CD4-positive, alpha-beta T cell (primary cell): ENCODE measurements at regions of chr12 and their contacts with region 1.

Region 1: DNA sequence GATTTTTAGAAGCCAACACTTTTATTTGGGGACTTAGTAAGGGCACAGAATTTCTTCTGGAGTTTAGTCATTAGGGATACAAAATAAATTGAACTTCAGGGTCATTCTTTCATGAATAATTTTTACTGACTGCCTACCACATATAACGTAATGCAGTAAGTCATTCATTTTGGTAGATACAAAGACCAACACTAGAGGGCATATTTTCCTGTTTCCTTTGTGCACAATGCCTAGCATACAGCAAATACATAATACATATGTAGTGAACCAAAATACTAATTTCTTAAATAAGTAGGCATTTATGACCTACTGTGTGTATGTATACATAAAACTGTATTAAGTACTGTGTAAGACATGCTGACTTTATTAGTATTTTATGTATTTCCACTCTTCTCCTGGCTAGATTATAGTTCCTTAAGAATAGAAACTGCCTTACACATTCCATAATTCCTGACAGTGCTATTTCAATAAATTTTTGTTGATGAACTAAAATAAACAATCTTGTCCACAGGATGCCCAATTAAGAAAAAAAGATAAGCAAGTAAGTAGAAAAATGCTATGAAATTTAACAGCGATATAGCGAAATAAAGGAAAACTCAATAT is 47.9 kb downstream of the PPP1R12A start:
- DNase-seq: peak in 3 of 14 experiments; percentile 59 to 68 (median 64)
- ATAC-seq: peak; percentile 77
- H3K4me3 ChIP-seq: no peak overlapping the region
- H3K4me3 Mint-ChIP-seq: no peak overlapping the region
- H3K27ac ChIP-seq: no peak overlapping the region
- H3K27ac Mint-ChIP-seq: peak overlapping the region; percentile 1
- H3K4me1 ChIP-seq: peaks cover 5% of the 10 kb centered on the region
- H3K4me1 Mint-ChIP-seq: peaks cover 74% of the 10 kb centered on the region
- H3K27me3 ChIP-seq: no peaks in the 10 kb centered on the region
- H3K27me3 Mint-ChIP-seq: no peaks in the 10 kb centered on the region
- CTCF ChIP-seq: peak; percentile 74

Region 2: DNA sequence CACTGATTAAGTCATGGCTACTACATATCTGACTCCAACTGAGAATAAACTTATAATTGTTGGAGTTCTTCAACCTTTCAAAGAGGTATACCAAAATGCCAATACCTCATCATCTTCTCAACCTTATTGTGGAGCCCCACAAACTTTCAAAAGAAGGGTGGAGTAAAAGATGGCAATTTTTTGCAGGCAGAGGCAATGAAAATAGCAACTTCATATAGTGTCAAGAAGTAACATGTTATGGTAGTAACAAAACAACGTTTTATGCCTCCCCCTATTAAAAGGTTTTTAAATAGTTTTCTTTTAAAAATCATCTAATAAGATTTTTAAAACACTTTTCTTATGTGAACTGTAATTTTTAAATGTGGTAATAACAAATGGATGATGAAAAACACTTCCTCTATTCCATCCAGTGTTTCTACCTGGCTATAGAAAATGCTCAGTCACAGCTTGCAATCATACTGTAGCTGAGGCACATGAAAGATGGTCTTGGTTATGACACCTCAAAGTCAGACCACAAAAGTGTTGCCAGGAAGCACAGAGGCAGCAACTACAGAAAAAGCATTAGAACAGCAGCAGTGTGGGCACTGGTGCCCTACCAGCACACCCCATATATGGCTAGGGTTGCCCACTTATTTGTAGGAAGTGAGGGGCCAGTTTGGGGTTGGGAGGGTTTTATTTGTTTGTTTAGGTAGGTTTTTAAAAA is 40.9 kb after region 1 on chr12:
- CTCF ChIA-PET with region 1: no interaction called
- POLR2A ChIA-PET with region 1: no interaction called
- intact Hi-C with region 1: loop called in 1 of 2 experiments (anchors 5 kb)
- DNase-seq: peak in 13 of 14 experiments; percentile 13 to 86 (median 25)
- ATAC-seq: peak; percentile 97
- H3K4me3 ChIP-seq: no peak overlapping the region
- H3K4me3 Mint-ChIP-seq: peak overlapping the region; percentile 52
- H3K27ac ChIP-seq: no peak overlapping the region
- H3K27ac Mint-ChIP-seq: peak overlapping the region; percentile 83
- H3K4me1 ChIP-seq: peaks cover 22% of the 10 kb centered on the region
- H3K4me1 Mint-ChIP-seq: peaks cover 72% of the 10 kb centered on the region
- H3K27me3 ChIP-seq: no peaks in the 10 kb centered on the region
- H3K27me3 Mint-ChIP-seq: no peaks in the 10 kb centered on the region
- CTCF ChIP-seq: no peak

Region 3: GRCh38 chr12:79935021-79935623 is 48.1 kb after region 1 on chr12 and contains the start of gene PPP1R12A:
- CTCF ChIA-PET with region 1: no interaction called
- POLR2A ChIA-PET with region 1: interaction called, 3 read pairs
- intact Hi-C with region 1: loop called in 1 of 2 experiments (anchors 5 kb)
- DNase-seq: peak; percentile 87 to 98 (median 92)
- ATAC-seq: peak; percentile 85
- H3K4me3 ChIP-seq: peak within 1 kb of the TSS; percentile 69
- H3K4me3 Mint-ChIP-seq: peak within 1 kb of the TSS; percentile 87
- H3K27ac ChIP-seq: peak within 1 kb of the TSS; percentile 83 to 85
- H3K27ac Mint-ChIP-seq: peak within 1 kb of the TSS; percentile 96
- H3K4me1 ChIP-seq: peaks cover 6% of the 10 kb centered on the region
- H3K4me1 Mint-ChIP-seq: peaks cover 48% of the 10 kb centered on the region
- H3K27me3 ChIP-seq: no peaks in the 10 kb centered on the region
- H3K27me3 Mint-ChIP-seq: no peaks in the 10 kb centered on the region
- CTCF ChIP-seq: peak; percentile 15
- total RNA-seq, gene PPP1R12A: 65.6 to 76.4 TPM

Region 4: DNA sequence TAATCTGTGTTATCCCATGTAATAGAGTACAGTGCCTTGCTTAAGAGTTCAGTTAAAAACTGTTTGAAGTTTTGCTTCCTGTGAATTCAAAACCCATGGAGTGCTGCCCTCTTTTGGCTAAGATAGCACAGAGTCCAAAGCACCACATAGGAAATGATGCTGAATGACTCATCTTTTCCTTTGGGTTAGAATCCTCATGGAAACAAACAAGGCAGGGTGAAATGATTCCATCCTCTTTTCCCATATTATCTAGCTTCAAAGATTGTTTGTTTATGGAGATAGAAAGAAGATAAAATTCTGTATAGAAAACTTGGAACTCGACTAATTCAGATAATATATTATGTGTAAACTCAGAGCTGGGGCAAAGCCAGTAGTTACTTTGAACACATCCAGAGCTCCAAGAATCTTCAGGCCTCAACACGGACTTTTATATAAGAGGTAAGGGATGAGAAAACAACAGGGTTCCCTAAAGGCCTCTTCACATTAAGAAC is 299.8 kb after region 1 on chr12:
- CTCF ChIA-PET with region 1: no interaction called
- POLR2A ChIA-PET with region 1: no interaction called
- intact Hi-C with region 1: loop called (anchors 1 to 5 kb)
- DNase-seq: peak in 7 of 14 experiments; percentile 1 to 63 (median 13)
- ATAC-seq: peak; percentile 71
- H3K4me3 ChIP-seq: no peak overlapping the region
- H3K4me3 Mint-ChIP-seq: no peak overlapping the region
- H3K27ac ChIP-seq: no peak overlapping the region
- H3K27ac Mint-ChIP-seq: no peak overlapping the region
- H3K4me1 ChIP-seq: no peaks in the 10 kb centered on the region
- H3K4me1 Mint-ChIP-seq: no peaks in the 10 kb centered on the region
- H3K27me3 ChIP-seq: no peaks in the 10 kb centered on the region
- H3K27me3 Mint-ChIP-seq: peaks cover 5% of the 10 kb centered on the region
- CTCF ChIP-seq: peak; percentile 56

Region 5: DNA sequence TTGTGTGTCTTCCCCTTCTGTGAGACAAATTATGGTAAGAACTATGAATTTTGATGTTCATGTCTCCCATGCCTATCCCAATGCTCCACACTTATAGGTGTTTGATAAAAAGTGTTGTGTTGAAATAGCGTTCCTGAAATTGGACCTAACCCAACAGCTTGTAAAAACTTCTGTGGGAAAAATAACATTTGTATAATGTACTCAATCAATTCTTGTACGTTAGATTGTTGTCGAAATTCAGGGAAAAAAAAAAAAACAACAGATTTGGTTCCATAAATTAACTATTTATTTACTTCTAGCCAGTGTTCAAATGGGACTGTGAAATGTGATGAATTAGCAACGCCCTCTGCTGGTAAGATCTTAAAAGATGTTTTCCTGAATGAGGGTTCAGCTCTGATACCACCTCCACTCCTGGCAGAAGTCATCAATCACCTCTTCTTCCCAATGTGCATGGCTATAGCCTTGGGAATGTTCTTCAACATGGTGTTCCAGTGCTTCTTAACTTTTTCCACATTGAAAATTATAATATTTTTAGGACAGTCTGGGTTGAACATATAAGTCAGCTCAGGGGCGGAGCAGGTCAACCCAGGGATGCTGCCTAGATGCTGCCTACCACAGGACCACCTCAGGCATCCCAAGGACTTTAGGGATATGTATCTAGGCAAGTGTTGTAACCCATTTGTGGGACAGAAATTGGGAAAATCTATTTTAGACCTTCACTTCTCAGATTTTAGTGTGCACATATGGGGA is 383.0 kb after region 1 on chr12:
- CTCF ChIA-PET with region 1: no interaction called
- POLR2A ChIA-PET with region 1: no interaction called
- intact Hi-C with region 1: loop called (anchors 1 to 5 kb)
- DNase-seq: peak in 3 of 14 experiments; percentile 26 to 36 (median 34)
- ATAC-seq: no peak
- H3K4me3 ChIP-seq: no peak overlapping the region
- H3K4me3 Mint-ChIP-seq: no peak overlapping the region
- H3K27ac ChIP-seq: no peak overlapping the region
- H3K27ac Mint-ChIP-seq: no peak overlapping the region
- H3K4me1 ChIP-seq: no peaks in the 10 kb centered on the region
- H3K4me1 Mint-ChIP-seq: no peaks in the 10 kb centered on the region
- H3K27me3 ChIP-seq: no peaks in the 10 kb centered on the region
- H3K27me3 Mint-ChIP-seq: peaks cover 17% of the 10 kb centered on the region
- CTCF ChIP-seq: peak; percentile 71